Posterior cingulate gyrus (tissue), 11 donors: ENCODE measurements at regions of chrX and their contacts with region 1.

Region 1: DNA sequence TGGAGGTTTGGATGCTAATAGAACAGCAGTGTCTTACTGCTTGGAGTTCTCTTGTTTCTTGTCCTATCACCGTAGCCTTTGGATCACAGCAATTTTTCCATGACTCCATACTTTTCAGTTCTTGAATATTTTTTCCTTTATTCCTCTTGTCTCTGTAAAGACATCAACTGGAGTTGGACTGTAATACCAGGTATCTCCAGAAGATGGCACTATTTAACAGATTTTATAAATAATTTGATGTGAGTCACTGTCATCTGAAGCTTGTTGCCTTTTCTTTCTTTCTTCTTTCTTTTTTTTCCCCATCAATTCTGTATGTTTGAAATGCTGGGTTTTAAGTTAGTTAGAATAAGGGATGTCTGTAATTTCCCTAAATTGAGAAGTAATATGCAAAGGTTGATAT is 24.1 kb downstream of the HPRT1 start:
- DNase-seq: no peak

Region 2: GRCh38 chrX:134313418-134313817 is 170.6 kb before region 1 on chrX:
- intact Hi-C with region 1: no loop called
- DNase-seq: no peak

Region 3: GRCh38 chrX:134718105-134718965 is 234.3 kb after region 1 on chrX:
- intact Hi-C with region 1: no loop called
- DNase-seq: no peak

Region 4: GRCh38 chrX:134782796-134783195 is 298.8 kb after region 1 on chrX:
- intact Hi-C with region 1: loop called (anchors 10 kb)
- DNase-seq: no peak